Heart right ventricle (tissue), 16 donors: ENCODE measurements at regions of chr1 and their contacts with region 1.

Region 1: GRCh38 chr1:196317535-196318522 is 290.4 kb downstream of the KCNT2 start:
- DNase-seq: peak in 1 of 2 donors; percentile 7
- ATAC-seq: no peak
- H3K4me3 ChIP-seq: no peak overlapping the region
- H3K27ac ChIP-seq: no peak overlapping the region
- H3K4me1 ChIP-seq: no peaks in the 10 kb centered on the region
- H3K27me3 ChIP-seq: no peaks in the 10 kb centered on the region
- CTCF ChIP-seq: peak in 7 of 9 donors; percentile 32 to 63 (median 53)

Region 2: DNA sequence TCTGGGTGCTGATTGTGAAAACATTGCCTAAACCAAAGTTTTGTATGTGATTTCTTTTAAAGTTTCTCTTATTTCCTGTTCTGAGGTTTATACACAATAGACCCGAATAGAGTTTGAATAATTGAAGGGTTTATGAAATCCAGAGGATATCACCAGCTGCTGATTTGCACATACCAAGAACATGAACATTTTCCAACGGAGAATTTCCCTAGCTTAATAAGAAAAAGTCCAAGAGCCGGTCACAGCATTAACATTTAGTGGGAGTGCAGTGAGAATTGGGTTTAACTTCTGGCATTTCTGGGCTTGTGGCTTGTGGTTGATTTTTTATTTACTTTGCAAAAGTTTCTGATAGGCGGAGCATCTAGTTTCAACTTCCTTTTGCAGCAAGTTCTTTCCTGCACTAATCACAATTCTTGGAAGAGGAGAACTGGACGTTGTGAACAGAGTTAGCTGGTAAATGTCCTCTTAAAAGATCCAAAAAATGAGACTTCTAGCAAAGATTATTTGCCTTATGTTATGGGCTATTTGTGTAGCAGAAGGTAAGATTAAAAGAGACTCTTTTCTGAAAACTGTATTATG is 333.9 kb after region 1 on chr1 and contains the start of gene CFH:
- intact Hi-C with region 1: loop called in 1 of 10 experiments (anchors 10 kb)
- DNase-seq: peak in 1 of 2 donors; percentile 10
- ATAC-seq: peak in 7 of 8 donors; percentile 47 to 83 (median 74)
- H3K4me3 ChIP-seq: peak within 1 kb of the TSS in 9 of 10 donors; percentile 2 to 53 (median 39)
- H3K27ac ChIP-seq: peak within 1 kb of the TSS in 7 of 10 donors; percentile 36 to 78 (median 56)
- H3K4me1 ChIP-seq: peaks cover 0 to 5% (median 0%) of the 10 kb centered on the region in 9 donors
- H3K27me3 ChIP-seq: no peaks in the 10 kb centered on the region
- CTCF ChIP-seq: no peak
- total RNA-seq, gene CFH: 12.7 to 50.5 (median 28.5) TPM

Region 3: DNA sequence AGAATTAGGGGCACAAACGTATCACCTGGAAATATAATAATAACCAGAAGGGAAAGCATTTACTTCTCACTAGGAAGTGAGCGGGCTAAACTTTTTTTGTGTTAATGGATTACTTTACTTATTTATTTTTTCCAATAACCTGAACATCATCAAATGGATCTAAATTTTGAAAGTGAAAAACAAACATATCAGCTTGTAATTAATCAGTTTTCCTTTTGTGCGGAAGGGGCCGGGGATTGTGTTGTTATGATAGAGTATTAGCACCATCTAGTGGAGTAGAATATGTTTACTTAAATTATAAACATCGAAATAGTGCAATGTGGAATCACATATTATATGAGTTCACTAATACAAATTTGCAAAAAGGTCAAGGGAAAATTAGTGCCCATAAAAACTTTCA is 343.0 kb after region 1 on chr1:
- intact Hi-C with region 1: loop called in 2 of 10 experiments (anchors 5 to 10 kb)
- DNase-seq: no peak
- ATAC-seq: peak in 7 of 8 donors; percentile 51 to 82 (median 72)
- H3K4me3 ChIP-seq: peak overlapping the region in 7 of 10 donors; percentile 3 to 42 (median 28)
- H3K27ac ChIP-seq: no peak overlapping the region
- H3K4me1 ChIP-seq: peaks cover 0 to 16% (median 0%) of the 10 kb centered on the region in 9 donors
- H3K27me3 ChIP-seq: no peaks in the 10 kb centered on the region
- CTCF ChIP-seq: peak; percentile 25 to 78 (median 55)